Tibial artery (tissue), 4 donors: ENCODE measurements at regions of chr20 and their contacts with region 1.

Region 1: GRCh38 chr20:62875419-62876361 is 14.1 kb upstream of the TCFL5 start:
- DNase-seq: peak; percentile 87 to 91
- H3K4me3 ChIP-seq: peak overlapping the region in 1 of 2 donors; percentile 16
- H3K27ac ChIP-seq: peak overlapping the region; percentile 77 to 79
- H3K4me1 ChIP-seq: peaks cover 5 to 21% (median 20%) of the 10 kb centered on the region in 4 donors
- H3K27me3 ChIP-seq: no peaks in the 10 kb centered on the region
- CTCF ChIP-seq: peak; percentile 48 to 58

Region 2: GRCh38 chr20:62837800-62838454 is 37.8 kb before region 1 on chr20:
- intact Hi-C with region 1: no loop called
- DNase-seq: no peak
- H3K4me3 ChIP-seq: no peak overlapping the region
- H3K27ac ChIP-seq: no peak overlapping the region
- H3K4me1 ChIP-seq: peaks cover 0 to 3% (median 0%) of the 10 kb centered on the region in 4 donors
- H3K27me3 ChIP-seq: peaks cover 0 to 39% of the 10 kb centered on the region in 2 donors
- CTCF ChIP-seq: no peak

Region 3: DNA sequence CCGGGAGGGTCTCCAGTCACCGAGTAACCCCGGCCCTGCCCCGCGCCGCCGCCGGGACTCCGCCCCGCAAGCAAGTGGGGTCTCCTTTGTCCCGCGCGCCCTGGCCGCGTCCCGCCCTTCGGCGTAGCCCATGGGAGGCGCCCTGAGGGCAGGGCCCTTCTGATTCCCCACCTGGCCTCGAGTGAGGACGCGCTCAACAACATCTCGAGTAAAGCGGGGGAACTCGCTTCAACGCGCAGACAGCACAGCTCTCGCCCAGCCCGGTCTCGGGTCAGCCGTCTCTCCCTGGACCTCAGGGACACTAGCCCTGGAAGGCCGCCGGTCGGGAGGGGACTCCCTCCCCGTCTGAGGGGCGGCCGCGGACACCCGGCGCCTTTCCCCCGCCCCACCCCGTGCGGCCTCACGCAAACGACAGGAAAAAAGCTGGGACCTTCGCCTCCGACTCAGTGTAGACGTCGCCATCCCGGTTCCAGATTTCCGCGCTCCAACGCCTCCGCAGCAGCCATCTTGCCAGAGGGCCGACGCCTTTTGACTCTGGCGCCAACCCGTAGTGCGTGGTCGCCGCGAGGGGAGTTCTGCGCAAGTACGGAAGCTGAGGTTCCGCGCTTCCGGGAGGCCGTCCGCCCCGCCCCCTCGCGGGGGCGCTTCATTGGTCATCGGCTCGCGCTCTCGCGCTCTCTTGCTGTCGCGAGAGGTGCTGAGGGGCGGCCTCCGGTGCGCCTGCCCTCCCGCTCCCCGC is 61.8 kb after region 1 on chr20:
- intact Hi-C with region 1: loop called (anchors 10 kb)
- DNase-seq: peak; percentile 95 to 98
- H3K4me3 ChIP-seq: peak overlapping the region; percentile 76 to 87
- H3K27ac ChIP-seq: peak overlapping the region; percentile 77 to 91
- H3K4me1 ChIP-seq: peaks cover 0 to 67% (median 50%) of the 10 kb centered on the region in 4 donors
- H3K27me3 ChIP-seq: no peaks in the 10 kb centered on the region
- CTCF ChIP-seq: no peak

Region 4: DNA sequence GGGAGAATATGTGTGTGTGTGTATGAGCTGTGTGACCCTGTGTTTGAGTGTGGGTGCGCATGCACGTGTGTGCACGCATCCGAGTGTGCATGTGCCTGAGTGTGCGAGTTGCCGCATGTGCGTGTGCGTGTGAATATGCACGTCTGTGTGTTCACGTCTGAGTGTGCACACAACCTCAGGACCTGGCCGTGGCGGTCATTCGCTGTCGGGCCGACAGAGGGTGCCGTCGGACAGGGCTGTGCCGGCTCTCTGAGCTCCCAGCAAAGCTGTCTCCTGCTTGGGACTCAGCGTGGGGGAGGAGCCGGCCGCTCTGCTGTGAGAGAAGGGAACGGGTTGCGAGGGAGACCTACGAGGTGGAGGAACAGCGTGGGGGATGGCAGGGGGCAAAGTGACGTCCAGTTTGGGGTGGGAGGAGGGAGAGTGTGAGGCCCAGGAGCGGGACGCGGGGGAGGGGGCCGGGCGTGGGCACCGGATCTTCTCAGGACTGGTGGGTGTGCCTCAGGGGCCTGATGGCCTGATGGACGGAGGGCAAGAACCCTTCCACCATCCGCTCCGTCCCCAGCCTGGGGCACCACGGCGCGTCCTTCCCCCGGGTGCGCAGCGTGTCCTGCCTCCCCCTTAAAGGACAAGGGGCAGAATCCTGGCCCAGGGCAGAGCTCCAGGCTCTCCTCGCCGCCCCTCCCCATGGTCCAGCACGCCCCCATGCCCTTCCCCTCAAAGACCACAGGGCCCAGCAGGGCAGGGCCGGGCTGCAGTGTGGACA is 96.8 kb after region 1 on chr20:
- intact Hi-C with region 1: no loop called
- DNase-seq: peak; percentile 84 to 87
- H3K4me3 ChIP-seq: peak overlapping the region; percentile 16 to 33
- H3K27ac ChIP-seq: no peak overlapping the region
- H3K4me1 ChIP-seq: peaks cover 0 to 10% (median 8%) of the 10 kb centered on the region in 4 donors
- H3K27me3 ChIP-seq: peaks cover 0 to 72% of the 10 kb centered on the region in 2 donors
- CTCF ChIP-seq: peak; percentile 94 to 96

Region 5: DNA sequence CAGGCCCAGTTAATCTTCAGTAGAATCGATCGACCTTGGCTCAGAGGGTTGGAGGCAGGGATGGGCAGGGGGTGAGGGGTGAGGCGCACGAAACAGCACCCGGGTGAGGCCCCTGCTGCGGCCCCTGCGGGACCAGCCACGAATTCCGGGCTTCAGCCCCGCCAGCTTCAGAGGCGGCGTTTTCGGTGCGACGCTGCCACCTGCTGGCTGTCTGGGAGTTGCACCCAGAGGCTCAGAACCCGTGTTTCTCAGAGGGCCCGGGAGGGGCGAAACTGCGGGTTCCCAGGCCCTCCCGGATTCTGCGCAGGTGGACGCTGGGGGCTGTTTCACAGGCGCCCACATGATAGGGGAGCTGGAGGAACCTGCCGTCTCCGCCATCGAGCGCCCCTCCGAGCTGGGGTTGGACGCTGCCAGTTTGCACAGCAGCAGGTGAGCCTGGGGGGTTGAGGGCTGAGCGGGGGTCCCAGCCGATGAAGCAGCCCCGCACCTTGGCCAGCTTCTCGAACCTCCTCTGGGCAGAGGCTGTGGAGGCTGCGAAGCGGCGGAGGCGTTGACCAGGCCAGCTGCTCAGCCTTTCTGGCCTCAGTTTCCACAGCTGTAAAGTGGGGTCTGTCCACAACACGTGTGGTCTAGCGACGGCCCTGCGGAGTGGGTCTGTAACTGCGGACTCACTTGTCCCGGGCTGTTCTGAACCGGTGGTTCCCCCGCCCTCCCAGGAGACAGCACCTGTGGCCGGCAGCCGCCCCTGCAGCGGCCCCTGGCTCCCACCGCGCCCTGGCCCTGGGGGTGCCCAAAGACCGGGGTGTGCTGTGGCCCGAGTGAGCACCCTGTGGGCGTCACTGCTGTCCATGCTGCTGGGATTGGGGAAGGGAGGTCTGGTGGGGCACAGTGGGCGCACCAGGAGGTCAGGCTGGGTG is 133.6 kb after region 1 on chr20:
- intact Hi-C with region 1: loop called (anchors 10 kb)
- DNase-seq: peak; percentile 38 to 80
- H3K4me3 ChIP-seq: no peak overlapping the region
- H3K27ac ChIP-seq: no peak overlapping the region
- H3K4me1 ChIP-seq: peaks cover 0 to 36% (median 20%) of the 10 kb centered on the region in 4 donors
- H3K27me3 ChIP-seq: peaks cover 15 to 89% of the 10 kb centered on the region in 2 donors
- CTCF ChIP-seq: peak; percentile 92 to 95

Region 6: GRCh38 chr20:63172720-63173119 is 297.0 kb after region 1 on chr20:
- intact Hi-C with region 1: no loop called
- DNase-seq: no peak
- H3K4me3 ChIP-seq: no peak overlapping the region
- H3K27ac ChIP-seq: no peak overlapping the region
- H3K4me1 ChIP-seq: peaks cover 0 to 26% (median 16%) of the 10 kb centered on the region in 4 donors
- H3K27me3 ChIP-seq: peaks cover 3 to 77% of the 10 kb centered on the region in 2 donors
- CTCF ChIP-seq: no peak